ENCODE measurements at regions of chr1 and their contacts with region 1.

Region 1: GRCh38 chr1:9438431-9439073 is 100.7 kb upstream of the SLC25A33 start:
- DNase-seq: peak; percentile 52 to 73 (median 66)
- H3K4me3 ChIP-seq: no peak overlapping the region
- H3K27ac ChIP-seq: peak overlapping the region in 1 of 2 donors; percentile 28
- H3K4me1 ChIP-seq: peaks cover 14% of the 10 kb centered on the region
- H3K27me3 ChIP-seq: no peaks in the 10 kb centered on the region
- CTCF ChIP-seq: no peak
- EP300 ChIP-seq: no peak
- POLR2A ChIP-seq: no peak

Region 2: DNA sequence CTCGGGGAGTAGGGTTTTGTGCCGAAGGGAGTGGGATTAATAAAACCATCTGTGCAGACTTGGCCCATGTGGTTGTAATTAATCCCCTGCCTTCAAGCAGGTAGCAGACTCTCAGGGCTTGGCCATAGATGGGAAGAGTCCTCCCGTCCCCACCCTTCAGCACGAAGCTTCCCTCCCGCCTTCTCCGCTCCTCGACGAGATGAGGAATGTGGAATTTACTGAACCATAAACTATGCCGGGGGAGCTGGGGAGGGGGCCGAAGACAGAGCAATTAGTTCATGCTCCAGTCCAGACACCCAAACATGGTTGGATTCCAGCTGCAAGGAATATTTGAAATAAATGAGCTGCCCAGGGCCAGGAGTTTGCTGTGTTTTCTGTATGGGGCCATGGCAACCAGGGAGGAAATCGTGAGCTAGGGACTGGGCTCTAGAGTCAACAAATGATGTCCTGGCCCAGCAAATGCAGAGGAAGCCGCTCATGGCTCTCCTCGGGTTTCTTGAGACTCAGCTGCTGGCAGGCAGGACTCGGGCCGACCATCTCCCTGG is 67.1 kb before region 1 on chr1:
- intact Hi-C with region 1: loop called in 2 of 4 experiments (anchors 10 kb)
- DNase-seq: peak; percentile 60 to 86 (median 78)
- H3K4me3 ChIP-seq: no peak overlapping the region
- H3K27ac ChIP-seq: peak overlapping the region; percentile 14 to 55
- H3K4me1 ChIP-seq: peaks cover 40% of the 10 kb centered on the region
- H3K27me3 ChIP-seq: no peaks in the 10 kb centered on the region
- CTCF ChIP-seq: no peak
- EP300 ChIP-seq: no peak
- POLR2A ChIP-seq: no peak

Region 3: GRCh38 chr1:9746211-9746610 is 307.7 kb after region 1 on chr1:
- intact Hi-C with region 1: no loop called
- DNase-seq: no peak
- H3K4me3 ChIP-seq: no peak overlapping the region
- H3K27ac ChIP-seq: no peak overlapping the region
- H3K4me1 ChIP-seq: no peaks in the 10 kb centered on the region
- H3K27me3 ChIP-seq: no peaks in the 10 kb centered on the region
- CTCF ChIP-seq: no peak
- EP300 ChIP-seq: no peak
- POLR2A ChIP-seq: no peak